ENCODE measurements at regions of chr12 and their contacts with region 1.

Region 1: GRCh38 chr12:22712083-22712482 is 87.1 kb downstream of the ETNK1 start:
- DNase-seq: no peak
- H3K4me3 ChIP-seq: no peak overlapping the region
- H3K27ac ChIP-seq: no peak overlapping the region
- H3K4me1 ChIP-seq: no peaks in the 10 kb centered on the region
- H3K27me3 ChIP-seq: no peaks in the 10 kb centered on the region
- CTCF ChIP-seq: no peak
- EP300 ChIP-seq: no peak
- POLR2A ChIP-seq: no peak

Region 2: GRCh38 chr12:21054334-21054733 is 1657.7 kb before region 1 on chr12:
- in situ Hi-C with region 1: no loop called
- intact Hi-C with region 1: loop called (anchors 5 kb)
- DNase-seq: no peak
- H3K4me3 ChIP-seq: no peak overlapping the region
- H3K27ac ChIP-seq: no peak overlapping the region
- H3K4me1 ChIP-seq: no peaks in the 10 kb centered on the region
- H3K27me3 ChIP-seq: no peaks in the 10 kb centered on the region
- CTCF ChIP-seq: no peak
- EP300 ChIP-seq: no peak
- POLR2A ChIP-seq: no peak

Region 3: DNA sequence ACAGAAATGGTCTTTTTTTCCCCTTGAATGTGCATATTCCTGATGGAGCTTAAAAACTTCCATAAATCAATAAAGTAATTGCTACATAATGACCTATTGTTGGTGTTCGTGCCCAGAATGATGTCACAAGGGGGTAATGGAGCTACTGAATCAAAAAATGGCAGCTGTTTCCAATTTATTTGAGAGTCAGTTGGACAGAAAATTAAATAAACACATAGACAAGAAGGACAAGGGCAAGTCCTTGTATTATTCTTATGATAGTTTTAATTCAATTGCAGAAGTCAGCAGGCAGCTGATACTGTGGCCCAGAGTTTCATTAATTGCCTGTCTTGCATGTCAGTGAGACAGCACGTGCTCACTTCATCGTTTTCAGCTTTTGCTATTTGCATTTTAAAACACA is 386.4 kb after region 1 on chr12:
- in situ Hi-C with region 1: no loop called
- intact Hi-C with region 1: no loop called
- DNase-seq: no peak
- H3K4me3 ChIP-seq: no peak overlapping the region
- H3K27ac ChIP-seq: no peak overlapping the region
- H3K4me1 ChIP-seq: no peaks in the 10 kb centered on the region
- H3K27me3 ChIP-seq: no peaks in the 10 kb centered on the region
- CTCF ChIP-seq: no peak
- EP300 ChIP-seq: no peak
- POLR2A ChIP-seq: no peak

Measured in transverse colon (tissue), 4 donors.